CD4-positive, alpha-beta memory T cell (primary cell): ENCODE measurements at regions of chr9 and their contacts with region 1.

Region 1: GRCh38 chr9:109098171-109098959 is 21.4 kb downstream of the TMEM245 start:
- DNase-seq: no peak
- H3K4me3 ChIP-seq: peak overlapping the region in 1 of 2 donors; percentile 17
- H3K4me3 Mint-ChIP-seq: peak overlapping the region in 7 of 8 donors; percentile 24 to 59 (median 39)
- H3K27ac ChIP-seq: no peak overlapping the region
- H3K27ac Mint-ChIP-seq: peak overlapping the region; percentile 29 to 89 (median 65)
- H3K4me1 ChIP-seq: peaks cover 81% of the 10 kb centered on the region
- H3K4me1 Mint-ChIP-seq: peaks cover 59 to 95% (median 77%) of the 10 kb centered on the region in 4 donors
- H3K27me3 ChIP-seq: no peaks in the 10 kb centered on the region
- H3K27me3 Mint-ChIP-seq: no peaks in the 10 kb centered on the region

Region 2: DNA sequence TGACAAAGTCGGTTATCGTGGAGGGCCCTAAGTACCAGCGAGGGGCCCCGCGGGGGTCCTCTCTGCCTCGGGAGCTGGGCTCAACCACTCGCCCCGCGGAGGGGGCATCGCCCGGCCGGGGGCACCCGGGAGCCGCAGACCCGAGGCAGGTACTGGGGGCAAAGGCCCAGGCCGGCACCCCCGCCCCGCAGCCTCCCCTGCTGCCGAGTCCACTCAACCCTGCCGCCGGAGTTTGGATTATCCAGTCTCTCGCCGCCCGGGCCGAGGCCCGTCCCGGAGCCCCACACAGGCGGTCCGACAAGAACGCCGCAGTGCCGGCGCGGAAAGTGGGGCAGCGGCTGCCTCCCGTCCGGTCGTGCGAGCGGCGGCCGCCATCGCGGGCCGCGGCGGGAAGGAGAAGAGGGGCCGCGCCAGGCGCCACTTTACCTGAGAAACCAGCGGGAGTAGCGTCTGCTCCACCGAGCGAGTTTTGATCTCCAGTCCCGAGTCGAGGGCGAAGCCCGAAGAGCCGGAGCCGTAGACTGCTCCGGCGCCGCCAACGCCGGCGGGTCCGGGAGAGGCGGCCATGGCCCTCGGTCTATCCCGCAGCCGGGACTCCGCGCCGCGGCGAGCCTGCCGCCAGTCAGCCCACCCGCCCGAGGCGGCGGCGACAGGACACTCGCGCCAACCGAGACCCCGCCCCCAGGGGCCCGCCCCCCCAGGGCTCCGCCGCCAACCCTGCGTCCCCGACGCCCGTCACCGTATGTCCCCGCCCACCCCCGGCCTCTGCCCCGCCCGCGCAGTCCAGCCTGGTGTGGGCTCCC is 85.3 kb before region 1 on chr9 and contains the start of gene CTNNAL1:
- CTCF ChIA-PET with region 1: no interaction called
- POLR2A ChIA-PET with region 1: no interaction called
- intact Hi-C with region 1: loop called (anchors 5 kb)
- DNase-seq: peak; percentile 82 to 91 (median 83)
- H3K4me3 ChIP-seq: peak within 1 kb of the TSS; percentile 66
- H3K4me3 Mint-ChIP-seq: peak within 1 kb of the TSS; percentile 93 to 100 (median 96)
- H3K27ac ChIP-seq: peak within 1 kb of the TSS; percentile 61
- H3K27ac Mint-ChIP-seq: peak within 1 kb of the TSS; percentile 93 to 99 (median 95)
- H3K4me1 ChIP-seq: peaks cover 13% of the 10 kb centered on the region
- H3K4me1 Mint-ChIP-seq: peaks cover 17 to 31% (median 28%) of the 10 kb centered on the region in 4 donors
- H3K27me3 ChIP-seq: no peaks in the 10 kb centered on the region
- H3K27me3 Mint-ChIP-seq: no peaks in the 10 kb centered on the region
- total RNA-seq, gene CTNNAL1: 2.6 to 3.3 TPM

Region 3: DNA sequence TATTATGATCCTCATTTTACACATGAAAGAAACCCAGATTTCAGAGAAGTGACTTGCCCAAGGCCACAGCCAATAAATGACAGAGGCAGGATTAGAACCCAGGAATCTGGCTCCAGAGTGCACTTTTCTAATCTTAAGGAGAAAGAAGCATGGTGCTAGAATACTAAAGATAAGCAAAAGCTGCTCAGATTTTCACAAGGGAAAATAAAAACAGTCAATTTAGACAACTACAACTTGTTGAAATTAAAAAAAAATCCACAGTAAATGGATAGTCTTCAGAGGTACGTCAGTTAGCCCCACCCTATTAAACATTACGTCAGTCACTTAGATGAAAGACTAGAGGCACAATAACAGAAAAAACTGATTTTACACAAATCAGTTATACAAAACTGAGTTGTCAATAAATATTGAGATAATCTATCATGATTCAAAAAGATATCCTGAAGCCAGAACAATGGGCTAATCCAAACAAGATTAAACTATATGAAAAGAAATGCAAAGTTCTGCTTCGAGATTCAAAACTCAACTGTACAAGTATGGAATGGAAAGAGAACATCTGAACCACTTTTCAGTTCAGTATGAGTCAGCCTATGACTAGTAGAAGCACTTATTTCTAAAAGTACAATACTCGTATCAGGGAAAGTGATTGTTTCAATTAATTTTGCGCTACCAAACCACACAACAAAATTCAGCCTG is 12.1 kb after region 1 on chr9:
- CTCF ChIA-PET with region 1: interaction called, 6 read pairs
- POLR2A ChIA-PET with region 1: interaction called, 6 read pairs
- intact Hi-C with region 1: loop called (anchors 1 kb)
- DNase-seq: peak; percentile 50 to 71 (median 64)
- H3K4me3 ChIP-seq: peak overlapping the region in 1 of 2 donors; percentile 29
- H3K4me3 Mint-ChIP-seq: peak overlapping the region; percentile 17 to 82 (median 78)
- H3K27ac ChIP-seq: peak overlapping the region; percentile 57
- H3K27ac Mint-ChIP-seq: peak overlapping the region; percentile 82 to 98 (median 95)
- H3K4me1 ChIP-seq: peaks cover 88% of the 10 kb centered on the region
- H3K4me1 Mint-ChIP-seq: peaks cover 54 to 84% (median 70%) of the 10 kb centered on the region in 4 donors
- H3K27me3 ChIP-seq: no peaks in the 10 kb centered on the region
- H3K27me3 Mint-ChIP-seq: no peaks in the 10 kb centered on the region

Region 4: DNA sequence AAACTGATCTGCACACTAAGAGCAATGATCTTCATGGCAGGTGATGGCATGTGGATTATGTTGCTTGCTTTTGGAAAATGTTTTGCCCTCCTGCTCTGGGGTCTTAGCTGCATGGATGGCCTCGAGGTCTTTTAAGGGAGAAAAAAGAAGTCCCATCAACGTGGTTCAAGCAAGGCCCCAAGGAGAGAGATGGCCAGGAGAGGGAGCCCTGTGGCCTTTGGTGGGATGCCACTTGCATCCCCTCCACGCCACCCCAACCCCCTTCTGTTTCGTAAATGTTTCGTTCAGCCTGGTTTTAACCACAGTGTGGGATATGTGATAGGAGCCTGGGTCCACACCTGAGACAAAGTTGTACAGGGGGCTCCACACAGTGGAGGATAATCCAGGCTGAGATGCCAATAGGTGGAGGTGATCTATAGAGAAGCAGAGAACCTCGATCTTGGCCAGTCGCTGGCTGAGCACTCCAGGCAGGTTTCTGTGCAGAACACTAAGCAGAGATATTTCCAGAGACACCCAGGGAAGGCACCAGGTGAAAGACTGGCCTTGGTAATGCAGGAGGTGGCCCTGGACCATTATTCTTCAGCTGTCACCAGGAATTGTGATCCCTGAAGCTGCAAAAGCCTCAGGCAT is 94.5 kb after region 1 on chr9:
- CTCF ChIA-PET with region 1: no interaction called
- POLR2A ChIA-PET with region 1: no interaction called
- intact Hi-C with region 1: loop called (anchors 10 kb)
- DNase-seq: no peak
- H3K4me3 ChIP-seq: no peak overlapping the region
- H3K4me3 Mint-ChIP-seq: no peak overlapping the region
- H3K27ac ChIP-seq: no peak overlapping the region
- H3K27ac Mint-ChIP-seq: no peak overlapping the region
- H3K4me1 ChIP-seq: no peaks in the 10 kb centered on the region
- H3K4me1 Mint-ChIP-seq: no peaks in the 10 kb centered on the region
- H3K27me3 ChIP-seq: no peaks in the 10 kb centered on the region
- H3K27me3 Mint-ChIP-seq: no peaks in the 10 kb centered on the region